WTC11 (cell line): ENCODE measurements at regions of chr22 and their contacts with region 1.

Region 1: GRCh38 chr22:31970490-31971444 is 26.4 kb downstream of the YWHAH start:
- DNase-seq: peak; percentile 93
- ATAC-seq: peak; percentile 92
- H3K4me3 Mint-ChIP-seq: peak overlapping the region; percentile 91
- H3K27ac Mint-ChIP-seq: no peak overlapping the region
- H3K4me1 Mint-ChIP-seq: peaks cover 3% of the 10 kb centered on the region; the same call in 1 of the 2 replicates
- H3K27me3 Mint-ChIP-seq: peaks cover 6% of the 10 kb centered on the region; the same call in 1 of the 2 replicates
- CTCF ChIP-seq: peak; percentile 98

Region 2: DNA sequence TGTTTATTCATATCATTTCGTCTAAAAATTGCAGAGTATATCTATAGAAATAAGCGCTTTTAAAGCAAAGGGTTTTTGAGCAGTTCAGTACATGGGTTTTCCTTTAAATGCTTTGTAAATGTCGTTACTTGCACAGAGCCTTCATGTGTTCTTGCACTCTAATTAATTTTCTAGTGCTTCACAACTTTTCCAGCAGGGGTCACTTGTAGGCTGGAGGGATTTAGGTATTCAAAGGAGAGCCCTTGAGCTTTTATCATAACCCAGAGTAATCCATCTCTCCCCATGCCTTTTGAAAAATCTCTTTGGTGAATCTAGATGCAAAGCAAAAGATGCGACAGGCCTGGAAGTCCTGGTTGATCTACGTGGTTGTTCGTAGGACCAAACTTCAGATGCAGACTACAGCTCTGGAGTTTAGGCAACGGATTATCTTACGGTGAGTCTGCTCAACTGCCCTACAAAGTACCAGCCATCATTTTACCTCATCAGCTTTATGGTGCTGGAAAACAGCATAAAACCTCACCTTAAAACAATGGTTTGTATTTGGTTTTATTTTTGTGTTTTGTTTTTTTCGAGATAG is 414.1 kb before region 1 on chr22:
- CTCF ChIA-PET with region 1: interaction called, 14 read pairs
- POLR2A ChIA-PET with region 1: no interaction called
- DNase-seq: no peak
- ATAC-seq: no peak
- H3K4me3 Mint-ChIP-seq: no peak overlapping the region
- H3K27ac Mint-ChIP-seq: no peak overlapping the region
- H3K4me1 Mint-ChIP-seq: peaks cover 5% of the 10 kb centered on the region
- H3K27me3 Mint-ChIP-seq: no peaks in the 10 kb centered on the region
- CTCF ChIP-seq: peak; percentile 32; the same call in 1 of the 2 replicates

Region 3: DNA sequence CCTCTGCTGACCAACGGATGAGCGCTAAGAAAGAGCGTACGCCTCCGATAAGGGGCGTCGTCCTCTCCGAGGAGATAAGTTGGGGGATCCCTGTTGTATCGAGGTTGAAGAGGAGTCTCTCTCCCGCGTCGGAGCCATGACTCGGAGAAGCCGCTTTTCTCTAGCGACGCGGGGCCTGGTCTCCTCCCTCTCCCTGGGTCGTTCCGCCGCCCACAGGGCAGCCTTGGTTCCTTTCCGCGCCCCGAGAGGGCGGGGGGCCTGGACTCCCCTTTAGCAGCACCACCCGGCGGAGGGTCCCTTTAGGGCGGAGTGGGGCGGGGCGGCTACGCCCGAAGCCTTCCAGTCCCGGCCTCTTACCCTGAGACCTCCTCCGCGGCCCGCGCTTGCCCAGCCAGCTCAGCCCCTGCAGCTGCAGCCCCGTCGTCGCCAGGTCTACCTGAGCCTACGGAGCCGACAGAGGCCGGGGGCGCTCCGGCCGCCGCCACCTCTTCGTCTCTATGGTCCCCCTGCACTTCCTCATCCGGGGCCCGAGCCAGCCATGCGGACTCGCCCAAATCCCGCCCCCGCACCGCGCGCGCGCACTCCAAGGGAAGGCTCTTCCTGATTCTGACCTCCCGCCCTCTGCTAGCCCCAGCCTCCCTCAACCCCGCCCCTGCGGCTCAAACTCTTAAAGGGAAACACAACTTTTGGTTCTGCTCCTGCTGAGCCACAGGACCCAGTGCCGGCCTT is 221.0 kb before region 1 on chr22 and contains the start of gene PRR14L:
- CTCF ChIA-PET with region 1: interaction called, 38 read pairs
- POLR2A ChIA-PET with region 1: interaction called, 5 read pairs
- DNase-seq: peak; percentile 99
- ATAC-seq: peak; percentile 55
- H3K4me3 Mint-ChIP-seq: peak within 1 kb of the TSS; percentile 93
- H3K27ac Mint-ChIP-seq: peak within 1 kb of the TSS; percentile 95
- H3K4me1 Mint-ChIP-seq: peaks cover 41% of the 10 kb centered on the region
- H3K27me3 Mint-ChIP-seq: no peaks in the 10 kb centered on the region
- CTCF ChIP-seq: no peak
- total RNA-seq, gene PRR14L: 84.7 to 90.1 TPM (median 89.3 TPM) in 3 replicates

Region 4: DNA sequence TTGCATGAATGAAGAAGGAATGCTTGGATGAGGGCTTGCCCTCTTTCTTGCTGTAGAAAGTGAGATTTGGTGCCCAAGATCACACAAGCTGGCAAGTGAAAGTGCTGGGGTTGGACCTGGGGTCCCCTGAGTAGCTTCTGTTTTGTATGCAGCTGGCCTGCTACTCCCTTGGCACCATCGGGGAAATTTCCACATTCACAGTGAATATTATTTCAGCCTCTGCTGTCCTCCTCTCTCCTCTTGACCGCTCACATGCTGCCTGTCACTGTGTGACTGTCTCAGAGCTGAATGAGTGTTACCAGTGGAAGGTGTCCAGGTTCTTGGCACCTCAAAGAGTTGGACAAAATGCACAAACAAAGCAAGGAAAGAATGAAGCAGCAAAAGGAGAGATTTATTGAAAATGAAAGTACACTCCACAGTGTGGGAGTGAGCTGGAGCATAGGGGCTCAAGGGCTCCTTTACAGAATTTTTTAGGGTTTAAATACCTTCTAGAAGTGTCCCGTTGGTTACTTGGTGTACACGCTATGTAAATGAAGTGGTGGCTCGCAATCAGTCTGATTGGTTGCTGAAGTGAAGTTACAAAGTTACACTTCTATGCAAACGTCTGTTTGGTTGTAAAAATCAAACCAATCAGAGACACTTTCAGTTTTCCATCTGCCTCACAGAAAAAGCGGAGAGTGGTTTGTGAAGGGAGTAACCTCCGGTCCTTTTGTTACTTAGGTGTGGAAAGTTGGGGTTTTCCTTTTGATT is 129.5 kb before region 1 on chr22:
- CTCF ChIA-PET with region 1: interaction called, 15 read pairs
- POLR2A ChIA-PET with region 1: no interaction called
- DNase-seq: no peak
- ATAC-seq: no peak
- H3K4me3 Mint-ChIP-seq: no peak overlapping the region
- H3K27ac Mint-ChIP-seq: peak overlapping the region; percentile 65; the same call in 1 of the 2 replicates
- H3K4me1 Mint-ChIP-seq: no peaks in the 10 kb centered on the region
- H3K27me3 Mint-ChIP-seq: no peaks in the 10 kb centered on the region
- CTCF ChIP-seq: no peak

Region 5: GRCh38 chr22:31917227-31917921 is 53.4 kb before region 1 on chr22:
- CTCF ChIA-PET with region 1: interaction called, 31 read pairs
- POLR2A ChIA-PET with region 1: no interaction called
- DNase-seq: no peak
- ATAC-seq: no peak
- H3K4me3 Mint-ChIP-seq: no peak overlapping the region
- H3K27ac Mint-ChIP-seq: no peak overlapping the region
- H3K4me1 Mint-ChIP-seq: no peaks in the 10 kb centered on the region
- H3K27me3 Mint-ChIP-seq: no peaks in the 10 kb centered on the region
- CTCF ChIP-seq: no peak

Region 6: DNA sequence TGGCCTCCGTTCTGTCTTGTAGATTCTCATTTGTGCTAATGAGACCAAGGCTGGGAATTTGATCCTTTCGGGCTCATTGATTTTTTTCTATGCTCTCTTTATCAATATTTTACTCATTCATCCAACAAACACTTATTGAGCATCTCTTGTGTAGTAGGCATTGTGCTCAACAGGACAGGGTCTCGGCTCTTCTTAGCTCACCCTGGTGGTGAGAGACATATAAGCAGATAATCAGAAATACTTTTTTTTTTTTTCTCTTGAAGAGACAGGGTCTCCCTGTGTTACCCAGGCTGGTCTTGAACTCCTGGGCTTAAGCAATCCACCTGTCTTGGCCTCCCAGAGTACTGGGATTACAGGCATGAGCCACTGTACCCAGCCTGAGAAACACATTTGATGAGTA is 24.3 kb after region 1 on chr22:
- CTCF ChIA-PET with region 1: interaction called, 58 read pairs
- POLR2A ChIA-PET with region 1: no interaction called
- DNase-seq: no peak
- ATAC-seq: peak; percentile 73
- H3K4me3 Mint-ChIP-seq: no peak overlapping the region
- H3K27ac Mint-ChIP-seq: no peak overlapping the region
- H3K4me1 Mint-ChIP-seq: no peaks in the 10 kb centered on the region
- H3K27me3 Mint-ChIP-seq: no peaks in the 10 kb centered on the region
- CTCF ChIP-seq: no peak; the same call in 1 of the 2 replicates

Region 7: DNA sequence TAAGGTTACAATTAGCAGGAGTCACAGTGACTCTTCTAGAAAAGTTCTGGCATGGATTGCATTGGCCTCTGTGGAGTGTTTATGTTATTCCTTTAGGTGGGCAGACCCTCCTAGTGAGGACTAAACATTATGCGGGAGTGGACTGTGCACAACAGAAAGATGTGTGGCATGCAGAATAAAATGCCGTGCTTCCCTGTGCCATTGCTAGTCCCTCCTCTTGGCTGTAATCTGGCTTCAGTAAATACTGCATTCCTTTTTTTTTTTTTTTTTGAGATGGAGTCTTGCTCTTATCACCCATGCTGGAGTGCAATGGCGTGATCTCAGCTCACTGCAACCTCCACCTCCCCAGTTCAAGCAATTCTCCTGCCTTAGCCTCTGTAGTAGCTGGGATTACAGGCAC is 117.3 kb after region 1 on chr22:
- CTCF ChIA-PET with region 1: interaction called, 46 read pairs
- POLR2A ChIA-PET with region 1: no interaction called
- DNase-seq: no peak
- ATAC-seq: no peak
- H3K4me3 Mint-ChIP-seq: no peak overlapping the region
- H3K27ac Mint-ChIP-seq: no peak overlapping the region
- H3K4me1 Mint-ChIP-seq: no peaks in the 10 kb centered on the region
- H3K27me3 Mint-ChIP-seq: peaks cover 8% of the 10 kb centered on the region; the same call in 1 of the 2 replicates
- CTCF ChIP-seq: no peak